Activated naive CD4-positive, alpha-beta T cell treated with anti-CD3 and anti-CD28 coated beads for 36 hours (primary cell): ENCODE measurements at regions of chr11 and their contacts with region 1.

Region 1: DNA sequence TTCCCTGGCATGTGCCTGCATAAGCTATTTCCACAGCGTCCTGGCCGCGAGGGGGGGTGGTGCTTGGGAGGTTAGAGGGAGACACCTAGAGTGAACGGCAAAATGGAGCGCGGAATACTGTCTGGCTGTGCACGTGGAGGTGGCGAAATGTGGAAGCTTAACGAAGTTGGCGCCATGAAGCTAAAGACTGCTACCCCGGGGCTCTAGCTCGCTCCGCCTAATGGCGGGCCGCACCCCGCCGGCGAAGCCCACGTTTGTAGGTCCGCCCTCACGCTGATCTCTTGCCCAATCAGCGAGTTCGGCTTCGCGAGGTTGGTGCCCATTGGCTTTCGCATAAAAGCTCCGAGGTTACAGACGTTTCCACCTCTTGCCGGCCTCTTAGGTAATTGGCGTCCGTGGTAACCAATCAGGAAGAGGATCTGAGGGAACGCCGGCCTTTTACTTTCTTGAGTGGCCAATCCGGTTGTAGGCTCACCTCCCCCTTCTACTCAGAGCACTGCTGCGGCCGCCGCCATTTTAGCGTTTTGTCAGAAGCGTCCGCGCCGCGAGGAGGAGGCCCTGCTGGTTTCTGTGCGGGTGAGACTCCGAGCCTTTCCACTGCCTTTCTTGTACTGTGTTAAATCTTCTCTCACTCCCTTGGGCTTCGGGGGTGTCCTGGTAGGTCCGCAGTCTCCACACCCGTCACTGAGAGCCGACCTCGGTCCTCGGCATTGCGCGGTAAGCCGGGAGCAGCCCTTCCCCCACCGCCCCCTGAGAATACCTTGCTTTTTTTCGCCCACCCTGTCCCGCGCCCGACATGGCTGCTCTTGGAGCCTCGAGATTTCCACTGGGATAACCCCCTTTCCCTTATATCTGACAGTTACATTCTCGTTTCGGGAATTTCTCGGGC is at the start of gene RBM4:
- DNase-seq: peak; percentile 99
- H3K4me3 Mint-ChIP-seq: peak within 1 kb of the TSS; percentile 95
- H3K27ac Mint-ChIP-seq: peak within 1 kb of the TSS; percentile 96
- H3K4me1 Mint-ChIP-seq: peaks cover 61% of the 10 kb centered on the region
- H3K27me3 Mint-ChIP-seq: no peaks in the 10 kb centered on the region
- total RNA-seq, gene RBM4: 85.9 to 98.1 TPM

Region 2: DNA sequence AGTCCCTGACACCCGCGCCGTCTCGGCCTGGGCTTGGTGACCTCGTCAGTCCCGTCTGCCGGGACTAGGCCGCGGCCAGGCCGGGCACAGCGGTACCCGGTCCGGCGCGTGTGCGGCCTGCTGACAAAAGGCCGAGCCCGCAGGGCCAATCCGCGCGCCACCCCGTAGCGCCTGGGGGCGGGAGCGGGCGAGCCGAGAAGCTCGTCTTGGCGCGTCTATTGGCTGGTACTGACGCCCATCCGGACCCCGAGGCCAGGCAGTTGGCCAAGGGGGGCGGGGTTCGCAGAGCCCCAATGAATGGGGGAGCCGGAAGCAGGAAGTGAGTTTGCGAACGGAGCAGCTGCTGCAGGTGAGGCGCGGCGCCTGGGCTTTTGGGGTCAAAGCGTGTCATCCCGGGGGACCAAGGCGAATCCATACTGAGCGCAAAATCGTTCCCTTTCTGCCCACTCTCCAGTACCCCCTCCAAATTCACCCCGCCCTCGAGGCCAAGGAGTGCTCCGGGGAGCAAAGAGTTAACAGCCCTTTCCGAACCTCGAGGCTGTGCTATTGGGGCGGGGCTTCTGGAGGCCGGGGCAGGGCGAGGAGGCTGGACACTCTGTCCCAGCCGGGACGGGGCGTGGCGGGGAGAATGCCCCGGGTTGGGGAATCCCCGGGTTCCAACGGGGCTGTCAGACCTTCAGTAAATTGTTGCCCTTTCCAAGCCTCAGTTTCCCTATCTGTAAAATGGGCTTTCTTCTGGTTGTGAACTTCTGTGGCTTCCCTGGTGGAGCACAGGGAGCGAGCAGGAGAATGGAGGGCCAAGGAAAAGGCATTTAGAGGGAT is 158.1 kb before region 1 on chr11 and contains the start of gene DPP3:
- CTCF ChIA-PET with region 1: no interaction called
- intact Hi-C with region 1: loop called (anchors 1 kb)
- DNase-seq: peak; percentile 97
- H3K4me3 Mint-ChIP-seq: peak within 1 kb of the TSS; percentile 89
- H3K27ac Mint-ChIP-seq: peak within 1 kb of the TSS; percentile 84
- H3K4me1 Mint-ChIP-seq: peaks cover 25% of the 10 kb centered on the region
- H3K27me3 Mint-ChIP-seq: no peaks in the 10 kb centered on the region
- total RNA-seq, gene DPP3: 73.8 to 80.1 TPM

Region 3: DNA sequence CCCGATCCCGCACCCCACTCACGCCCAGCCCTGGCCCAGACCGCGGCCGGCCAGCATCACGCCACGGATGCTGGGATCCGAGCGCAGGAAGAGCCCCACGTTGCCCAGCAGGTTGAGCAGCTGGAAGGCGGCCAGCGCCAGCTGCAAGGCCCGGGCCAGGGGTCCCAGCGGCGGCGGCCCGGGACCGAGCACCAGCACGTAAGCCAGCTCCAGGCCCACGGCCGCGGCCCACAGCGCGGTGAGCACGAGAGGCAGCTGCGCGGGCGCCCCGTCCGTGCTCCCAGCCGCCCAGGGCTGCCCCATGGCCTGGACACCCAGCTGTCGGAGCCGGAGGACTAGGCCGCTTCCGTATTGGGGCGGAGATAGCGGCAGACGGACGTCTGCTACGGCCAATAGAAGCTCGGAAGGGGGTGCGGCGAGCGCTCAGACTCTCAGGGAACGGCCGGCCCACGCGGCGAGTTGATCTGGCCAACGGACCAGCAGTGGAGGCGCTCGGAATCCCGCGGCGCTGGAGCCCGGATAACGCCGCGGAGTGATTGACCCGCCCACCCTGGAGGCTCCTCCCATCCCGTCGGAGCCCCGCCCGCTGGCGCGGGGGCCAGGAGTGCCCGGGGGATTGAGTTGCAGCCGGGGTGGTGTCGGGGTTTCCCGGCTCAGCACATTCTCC is 92.6 kb before region 1 on chr11 and contains the start of gene ZDHHC24:
- CTCF ChIA-PET with region 1: no interaction called
- intact Hi-C with region 1: loop called (anchors 1 kb)
- DNase-seq: peak; percentile 91
- H3K4me3 Mint-ChIP-seq: peak within 1 kb of the TSS; percentile 75
- H3K27ac Mint-ChIP-seq: peak within 1 kb of the TSS; percentile 30
- H3K4me1 Mint-ChIP-seq: peaks cover 18% of the 10 kb centered on the region
- H3K27me3 Mint-ChIP-seq: no peaks in the 10 kb centered on the region
- total RNA-seq, gene ZDHHC24: 11.5 to 13.4 TPM

Region 4: GRCh38 chr11:66592457-66593302 is 45.7 kb before region 1 on chr11 and contains the starts of genes CCDC87 and CCS:
- CTCF ChIA-PET with region 1: interaction called, 5 read pairs
- intact Hi-C with region 1: loop called (anchors 1 kb)
- DNase-seq: peak; percentile 98
- H3K4me3 Mint-ChIP-seq: peak within 1 kb of the TSS; percentile 100
- H3K27ac Mint-ChIP-seq: peak within 1 kb of the TSS; percentile 98
- H3K4me1 Mint-ChIP-seq: peaks cover 30% of the 10 kb centered on the region
- H3K27me3 Mint-ChIP-seq: no peaks in the 10 kb centered on the region
- total RNA-seq, gene CCDC87: 0.07 to 0.12 TPM
- total RNA-seq, gene CCS: 22.6 to 22.8 TPM

Region 5: GRCh38 chr11:66607126-66607834 is 31.1 kb before region 1 on chr11:
- CTCF ChIA-PET with region 1: no interaction called
- intact Hi-C with region 1: no loop called
- DNase-seq: no peak
- H3K4me3 Mint-ChIP-seq: no peak overlapping the region
- H3K27ac Mint-ChIP-seq: no peak overlapping the region
- H3K4me1 Mint-ChIP-seq: peaks cover 6% of the 10 kb centered on the region
- H3K27me3 Mint-ChIP-seq: no peaks in the 10 kb centered on the region